ENCODE measurements at regions of chr17 and their contacts with region 1.

Region 1: DNA sequence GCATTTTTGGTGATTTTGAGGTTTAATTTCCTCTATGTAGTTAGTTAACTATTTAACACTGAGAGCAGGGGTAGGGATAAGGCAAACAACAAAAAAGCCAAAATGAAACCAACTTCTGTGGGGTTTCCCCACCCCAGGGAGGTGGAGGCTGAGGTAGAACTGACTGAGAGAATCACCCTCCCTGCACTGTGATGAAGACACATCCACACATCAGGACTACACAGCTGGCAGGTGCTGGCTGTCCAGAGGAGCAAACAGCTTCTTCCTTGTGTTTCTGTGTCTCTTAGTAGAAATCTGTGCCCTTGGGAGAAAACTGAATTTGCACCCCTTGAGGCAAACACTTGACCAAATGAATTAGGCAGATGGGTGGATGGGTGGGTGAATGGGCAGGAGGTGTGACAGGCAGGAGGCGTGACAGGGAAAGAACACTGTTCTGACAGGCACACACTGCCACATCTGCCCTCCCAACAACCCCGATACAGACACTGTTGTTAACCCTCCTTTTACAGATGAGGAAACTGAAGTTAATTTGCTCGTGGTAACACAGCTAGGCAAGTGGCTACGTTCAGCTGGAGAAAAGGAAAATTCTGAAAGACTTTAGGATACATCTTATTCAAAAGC is 62.9 kb upstream of the AMZ2 start:
- DNase-seq: peak; percentile 69 to 84 (median 75)
- H3K4me3 ChIP-seq: peak overlapping the region; percentile 1 to 54
- H3K4me3 Mint-ChIP-seq: peak overlapping the region; percentile 78 to 100 (median 94)
- H3K27ac ChIP-seq: peak overlapping the region; percentile 80
- H3K27ac Mint-ChIP-seq: peak overlapping the region; percentile 90 to 96 (median 95)
- H3K4me1 ChIP-seq: peaks cover 73% of the 10 kb centered on the region
- H3K4me1 Mint-ChIP-seq: peaks cover 46 to 89% (median 65%) of the 10 kb centered on the region in 4 donors
- H3K27me3 ChIP-seq: no peaks in the 10 kb centered on the region
- H3K27me3 Mint-ChIP-seq: no peaks in the 10 kb centered on the region

Region 2: DNA sequence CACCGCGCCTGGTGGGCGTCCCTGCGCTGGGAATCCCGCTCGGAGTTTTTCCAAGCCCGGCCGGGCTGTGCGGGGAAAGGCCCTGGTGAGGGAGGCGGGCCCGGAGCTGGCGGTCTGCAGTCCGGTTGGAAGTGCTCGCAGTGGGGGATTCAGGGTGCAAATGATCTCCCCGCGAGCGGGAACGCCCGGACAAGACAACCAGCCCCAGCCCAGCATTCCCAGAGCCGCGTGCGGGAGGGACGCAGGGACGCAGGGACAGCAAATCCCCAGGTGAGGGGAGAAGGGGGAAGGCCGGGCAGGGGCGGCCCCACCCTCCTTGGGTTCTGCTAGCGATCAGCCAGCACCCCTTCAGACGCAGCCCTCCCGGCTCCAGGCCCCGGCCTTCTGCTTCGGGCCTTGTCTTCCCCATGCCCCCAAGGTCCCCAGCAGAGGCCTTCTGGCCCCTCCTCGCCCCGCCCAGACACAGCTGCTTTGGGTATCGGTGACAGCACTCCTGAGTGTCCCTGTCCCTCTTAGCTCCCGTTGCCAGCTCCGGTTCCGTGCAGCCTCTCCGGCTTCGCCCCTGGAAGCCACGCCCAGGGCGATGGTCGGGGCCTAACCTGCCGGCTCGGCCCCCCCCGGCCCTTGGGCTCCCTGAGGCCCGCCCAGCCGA is 12.1 kb after region 1 on chr17:
- CTCF ChIA-PET with region 1: interaction called, 270 read pairs
- POLR2A ChIA-PET with region 1: interaction called, 330 read pairs
- intact Hi-C with region 1: loop called (anchors 1 kb)
- DNase-seq: peak in 3 of 5 donors; percentile 22 to 65 (median 44)
- H3K4me3 ChIP-seq: peak overlapping the region; percentile 36 to 74
- H3K4me3 Mint-ChIP-seq: peak overlapping the region; percentile 77 to 87 (median 82)
- H3K27ac ChIP-seq: peak overlapping the region; percentile 54
- H3K27ac Mint-ChIP-seq: peak overlapping the region in 2 of 7 donors; percentile 63 to 94
- H3K4me1 ChIP-seq: peaks cover 48% of the 10 kb centered on the region
- H3K4me1 Mint-ChIP-seq: peaks cover 19 to 51% (median 31%) of the 10 kb centered on the region in 4 donors
- H3K27me3 ChIP-seq: no peaks in the 10 kb centered on the region
- H3K27me3 Mint-ChIP-seq: no peaks in the 10 kb centered on the region

Region 3: GRCh38 chr17:68247445-68248198 is 62.7 kb after region 1 on chr17 and contains the start of gene AMZ2:
- CTCF ChIA-PET with region 1: interaction called, 7 read pairs
- POLR2A ChIA-PET with region 1: interaction called, 49 read pairs
- intact Hi-C with region 1: loop called (anchors 2 kb)
- DNase-seq: peak; percentile 94 to 99 (median 97)
- H3K4me3 ChIP-seq: peak within 1 kb of the TSS; percentile 76 to 95
- H3K4me3 Mint-ChIP-seq: peak within 1 kb of the TSS; percentile 85 to 94 (median 94)
- H3K27ac ChIP-seq: peak within 1 kb of the TSS; percentile 99
- H3K27ac Mint-ChIP-seq: peak within 1 kb of the TSS; percentile 97 to 99 (median 99)
- H3K4me1 ChIP-seq: peaks cover 37% of the 10 kb centered on the region
- H3K4me1 Mint-ChIP-seq: peaks cover 33 to 59% (median 37%) of the 10 kb centered on the region in 4 donors
- H3K27me3 ChIP-seq: no peaks in the 10 kb centered on the region
- H3K27me3 Mint-ChIP-seq: no peaks in the 10 kb centered on the region
- total RNA-seq, gene AMZ2: 66.1 to 81.2 TPM

Region 4: GRCh38 chr17:68341482-68341881 is 156.6 kb after region 1 on chr17:
- CTCF ChIA-PET with region 1: no interaction called
- POLR2A ChIA-PET with region 1: no interaction called
- intact Hi-C with region 1: no loop called
- DNase-seq: no peak
- H3K4me3 ChIP-seq: no peak overlapping the region
- H3K4me3 Mint-ChIP-seq: no peak overlapping the region
- H3K27ac ChIP-seq: no peak overlapping the region
- H3K27ac Mint-ChIP-seq: no peak overlapping the region
- H3K4me1 ChIP-seq: peaks cover 40% of the 10 kb centered on the region
- H3K4me1 Mint-ChIP-seq: peaks cover 40 to 59% (median 49%) of the 10 kb centered on the region in 4 donors
- H3K27me3 ChIP-seq: no peaks in the 10 kb centered on the region
- H3K27me3 Mint-ChIP-seq: no peaks in the 10 kb centered on the region

Region 5: GRCh38 chr17:68356520-68356919 is 171.6 kb after region 1 on chr17:
- CTCF ChIA-PET with region 1: no interaction called
- POLR2A ChIA-PET with region 1: interaction called, 4 read pairs
- intact Hi-C with region 1: loop called (anchors 10 kb)
- DNase-seq: peak; percentile 81 to 86 (median 83)
- H3K4me3 ChIP-seq: peak overlapping the region in 1 of 2 donors; percentile 21
- H3K4me3 Mint-ChIP-seq: peak overlapping the region; percentile 72 to 90 (median 78)
- H3K27ac ChIP-seq: peak overlapping the region; percentile 41
- H3K27ac Mint-ChIP-seq: peak overlapping the region; percentile 77 to 94 (median 92)
- H3K4me1 ChIP-seq: peaks cover 63% of the 10 kb centered on the region
- H3K4me1 Mint-ChIP-seq: peaks cover 37 to 70% (median 54%) of the 10 kb centered on the region in 4 donors
- H3K27me3 ChIP-seq: no peaks in the 10 kb centered on the region
- H3K27me3 Mint-ChIP-seq: no peaks in the 10 kb centered on the region